ENCODE measurements at regions of chr2 and their contacts with region 1.

Region 1: DNA sequence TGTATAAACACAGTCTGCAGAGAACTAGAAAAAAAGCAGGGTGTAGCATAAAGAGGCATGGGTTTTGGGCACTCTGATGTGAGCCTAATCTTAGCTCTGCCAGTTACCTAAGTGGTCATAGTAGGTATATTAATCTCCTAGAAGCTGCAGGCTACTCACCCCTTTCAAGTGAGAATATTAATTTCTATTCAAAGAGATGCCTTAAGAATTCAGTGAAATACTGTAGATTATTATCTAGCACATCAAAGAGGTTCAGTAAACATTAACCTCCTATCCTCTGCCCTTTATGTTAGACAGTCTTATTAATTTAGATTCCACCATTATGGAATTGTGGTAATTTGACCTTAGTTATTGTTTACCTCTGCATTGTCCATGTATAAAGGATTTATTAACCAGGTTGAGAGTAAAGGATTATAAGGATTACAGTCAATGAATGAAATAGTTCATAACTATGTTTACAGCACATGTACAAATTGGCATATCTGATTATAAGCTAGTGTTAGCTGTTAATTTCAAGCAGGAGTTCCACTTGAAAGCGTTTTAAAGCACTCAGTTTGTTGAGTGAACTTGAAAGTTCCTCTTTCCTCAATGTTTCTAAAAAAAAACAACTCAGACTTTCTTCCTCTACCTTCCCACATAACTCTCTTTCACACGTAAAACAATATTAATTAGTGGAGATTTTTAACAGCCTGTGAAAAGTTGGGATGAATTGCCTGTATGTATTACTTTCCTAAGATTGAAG is 150.6 kb upstream of the EPC2 start:
- DNase-seq: no peak
- H3K4me3 ChIP-seq: no peak overlapping the region
- H3K27ac ChIP-seq: no peak overlapping the region
- H3K4me1 ChIP-seq: no peaks in the 10 kb centered on the region
- H3K27me3 ChIP-seq: no peaks in the 10 kb centered on the region
- CTCF ChIP-seq: no peak

Region 2: DNA sequence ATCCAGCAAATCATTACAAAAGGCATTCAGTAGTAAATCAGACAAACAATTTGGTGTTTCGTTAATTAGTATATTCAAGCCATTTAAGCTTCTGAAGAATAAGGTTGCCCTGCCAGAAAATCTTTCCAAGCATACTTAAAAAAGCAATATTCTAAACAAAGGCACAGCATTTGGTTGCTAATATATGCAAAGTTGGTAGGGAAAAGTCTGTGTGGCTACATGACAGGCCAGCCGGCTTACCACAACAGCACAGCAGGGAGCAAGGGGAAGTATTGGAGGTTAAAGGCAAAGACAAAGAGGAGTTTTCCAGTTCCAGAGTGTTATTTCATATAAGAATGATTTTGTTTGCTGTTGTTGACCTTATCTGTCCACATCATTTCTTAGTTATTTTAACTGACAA is 190.8 kb before region 1 on chr2:
- CTCF ChIA-PET with region 1: no interaction called
- POLR2A ChIA-PET with region 1: no interaction called
- intact Hi-C with region 1: no loop called
- DNase-seq: peak; percentile 67
- H3K4me3 ChIP-seq: no peak overlapping the region
- H3K27ac ChIP-seq: no peak overlapping the region
- H3K4me1 ChIP-seq: peaks cover 6% of the 10 kb centered on the region
- H3K27me3 ChIP-seq: no peaks in the 10 kb centered on the region
- CTCF ChIP-seq: no peak

Region 3: GRCh38 chr2:148430101-148430500 is 63.9 kb before region 1 on chr2:
- CTCF ChIA-PET with region 1: no interaction called
- POLR2A ChIA-PET with region 1: no interaction called
- intact Hi-C with region 1: loop called (anchors 10 kb)
- DNase-seq: no peak
- H3K4me3 ChIP-seq: no peak overlapping the region
- H3K27ac ChIP-seq: no peak overlapping the region
- H3K4me1 ChIP-seq: no peaks in the 10 kb centered on the region
- H3K27me3 ChIP-seq: no peaks in the 10 kb centered on the region
- CTCF ChIP-seq: no peak

Region 4: DNA sequence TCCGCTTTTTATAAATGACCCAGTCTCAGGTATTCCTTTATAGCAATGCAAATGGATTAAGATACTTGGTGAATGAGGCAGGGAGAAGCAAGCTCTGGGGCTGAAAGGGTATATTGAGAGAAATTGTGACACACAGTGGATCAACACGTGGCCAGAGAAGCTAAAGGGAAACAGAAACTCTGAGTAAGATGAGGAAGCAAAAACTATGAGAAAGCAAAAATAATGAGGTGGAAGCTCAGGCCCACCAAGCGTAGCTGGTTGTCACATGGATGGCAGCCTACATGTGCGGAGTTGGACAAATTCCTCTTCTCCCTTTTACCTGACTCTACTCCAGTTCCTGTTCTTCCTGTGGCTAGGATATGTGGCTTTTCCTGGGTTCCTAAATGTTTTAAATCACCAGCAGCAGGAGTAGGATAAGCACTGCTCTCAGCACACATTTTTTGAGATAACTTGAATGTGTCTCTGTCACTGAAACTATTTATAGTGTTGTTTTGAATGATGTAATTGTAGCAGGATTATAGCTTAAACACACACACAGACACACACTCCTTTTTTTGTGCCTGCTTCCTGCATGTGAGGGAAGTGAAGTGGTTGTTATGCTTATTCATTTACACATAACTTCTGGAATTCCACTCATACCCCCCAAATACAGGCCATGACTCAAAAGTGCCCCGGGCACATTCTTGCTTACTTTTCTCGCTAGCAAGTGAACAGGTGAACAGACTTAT is 120.5 kb after region 1 on chr2:
- CTCF ChIA-PET with region 1: no interaction called
- POLR2A ChIA-PET with region 1: no interaction called
- intact Hi-C with region 1: no loop called
- DNase-seq: peak; percentile 58
- H3K4me3 ChIP-seq: no peak overlapping the region
- H3K27ac ChIP-seq: peak overlapping the region; percentile 60
- H3K4me1 ChIP-seq: peaks cover 28% of the 10 kb centered on the region
- H3K27me3 ChIP-seq: no peaks in the 10 kb centered on the region
- CTCF ChIP-seq: no peak

Measured in A673 (cell line).